ENCODE measurements at regions of chr10 and their contacts with region 1.

Region 1: DNA sequence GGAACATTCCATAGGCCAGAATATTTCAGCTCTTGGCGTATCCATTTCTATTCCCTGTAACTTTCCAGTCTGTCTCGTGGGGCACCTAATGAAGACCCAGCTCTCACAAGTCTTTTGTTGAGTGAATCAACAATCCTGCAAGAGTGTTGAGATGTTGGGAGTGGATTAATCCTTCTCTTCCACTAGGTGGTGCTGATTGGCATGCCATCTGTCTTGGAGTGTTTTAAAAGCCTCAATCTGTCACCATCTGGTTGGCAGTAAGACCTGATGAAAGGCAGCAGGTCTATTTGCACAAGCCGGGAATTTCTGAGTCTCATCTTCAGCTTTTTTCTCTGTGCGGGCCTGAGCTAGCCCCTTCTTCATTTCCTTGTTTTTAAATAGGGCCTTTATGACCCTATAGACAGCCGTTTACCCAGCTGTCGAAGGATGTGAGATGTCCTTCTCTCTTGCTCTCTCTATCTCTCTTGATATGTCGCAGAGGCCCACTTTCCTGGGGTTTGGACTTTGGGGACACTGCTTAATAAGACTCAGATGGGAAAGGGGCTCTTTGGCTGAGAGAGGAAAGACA is 180.5 kb downstream of the ZNF365 start:
- DNase-seq: no peak
- ATAC-seq: peak; percentile 93
- H3K4me3 ChIP-seq: no peak overlapping the region
- H3K27ac ChIP-seq: no peak overlapping the region
- H3K4me1 ChIP-seq: no peaks in the 10 kb centered on the region
- H3K27me3 ChIP-seq: peaks cover 2 to 4% of the 10 kb centered on the region in 2 experiments; a peak in 2 of 4 replicates
- CTCF ChIP-seq: peak; percentile 63 to 68 (median 63); a peak in 5 of 6 replicates
- EP300 ChIP-seq: no peak
- POLR2A ChIP-seq: no peak
- RAD21 ChIP-seq: peak; percentile 85

Region 2: GRCh38 chr10:63083904-63084689 is 529.4 kb after region 1 on chr10:
- CTCF ChIA-PET with region 1: interaction called, 11 read pairs
- POLR2A ChIA-PET with region 1: no interaction called
- RAD21 ChIA-PET with region 1: interaction called, 3 read pairs
- SMC1A ChIA-PET with region 1: interaction called, 3 read pairs
- in situ Hi-C with region 1: no loop called
- intact Hi-C with region 1: loop called (anchors 2 kb)
- DNase-seq: peak; percentile 38
- ATAC-seq: peak; percentile 94
- H3K4me3 ChIP-seq: no peak overlapping the region
- H3K27ac ChIP-seq: no peak overlapping the region
- H3K4me1 ChIP-seq: no peaks in the 10 kb centered on the region
- H3K27me3 ChIP-seq: no peaks in the 10 kb centered on the region; a peak in 1 of 4 replicates
- CTCF ChIP-seq: peak; percentile 63 to 84 (median 76)
- EP300 ChIP-seq: no peak
- POLR2A ChIP-seq: no peak
- RAD21 ChIP-seq: peak; percentile 99